Activated CD4-positive, alpha-beta T cell treated with anti-CD3 and anti-CD28 coated beads for 36 hours (primary cell): ENCODE measurements at regions of chr1 and their contacts with region 1.

Region 1: GRCh38 chr1:114282751-114283403 is 129.2 kb upstream of the SYT6 start:
- DNase-seq: peak; percentile 92
- ATAC-seq: peak; percentile 100
- H3K4me3 Mint-ChIP-seq: no peak overlapping the region
- H3K27ac Mint-ChIP-seq: no peak overlapping the region
- H3K4me1 Mint-ChIP-seq: peaks cover 8% of the 10 kb centered on the region
- H3K27me3 Mint-ChIP-seq: peaks cover 2% of the 10 kb centered on the region

Region 2: GRCh38 chr1:114093624-114094376 is 189.1 kb before region 1 on chr1:
- CTCF ChIA-PET with region 1: interaction called, 3 read pairs
- POLR2A ChIA-PET with region 1: no interaction called
- intact Hi-C with region 1: loop called in 1 of 2 experiments (anchors 5 kb)
- DNase-seq: no peak
- ATAC-seq: peak; percentile 12
- H3K4me3 Mint-ChIP-seq: no peak overlapping the region
- H3K27ac Mint-ChIP-seq: no peak overlapping the region
- H3K4me1 Mint-ChIP-seq: no peaks in the 10 kb centered on the region
- H3K27me3 Mint-ChIP-seq: peaks cover 7% of the 10 kb centered on the region

Region 3: DNA sequence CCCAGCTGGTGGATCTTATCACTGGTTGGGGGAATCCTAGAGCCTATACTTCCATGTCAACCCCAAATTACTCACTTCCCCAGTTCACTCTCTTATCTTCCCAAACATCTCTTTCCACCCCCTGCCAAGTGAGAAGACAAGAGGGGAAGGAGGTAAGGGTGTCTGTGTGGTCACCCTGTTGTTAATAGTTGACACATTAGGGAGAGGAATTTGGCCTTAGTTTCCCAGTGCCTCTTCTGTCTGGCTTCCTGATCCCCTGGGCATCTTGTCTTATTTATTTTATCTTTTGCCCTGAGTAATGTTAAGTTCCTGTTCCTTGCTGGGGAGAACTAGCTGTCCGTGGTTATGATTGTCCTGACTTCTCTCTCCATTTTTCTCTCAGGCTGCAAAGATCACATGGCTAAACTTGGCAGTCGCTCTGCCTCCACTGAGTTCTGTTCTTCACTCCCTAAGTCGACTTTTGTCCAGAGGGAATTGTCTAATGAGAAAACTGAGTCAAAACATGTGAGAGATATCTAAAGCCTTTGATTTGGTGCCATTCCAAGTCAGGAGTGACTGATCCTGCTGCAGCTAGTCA is 27.9 kb after region 1 on chr1:
- CTCF ChIA-PET with region 1: no interaction called
- POLR2A ChIA-PET with region 1: no interaction called
- intact Hi-C with region 1: no loop called
- DNase-seq: no peak
- ATAC-seq: no peak
- H3K4me3 Mint-ChIP-seq: no peak overlapping the region
- H3K27ac Mint-ChIP-seq: no peak overlapping the region
- H3K4me1 Mint-ChIP-seq: no peaks in the 10 kb centered on the region
- H3K27me3 Mint-ChIP-seq: peaks cover 1% of the 10 kb centered on the region